ENCODE measurements at regions of chr6 and their contacts with region 1.

Region 1: DNA sequence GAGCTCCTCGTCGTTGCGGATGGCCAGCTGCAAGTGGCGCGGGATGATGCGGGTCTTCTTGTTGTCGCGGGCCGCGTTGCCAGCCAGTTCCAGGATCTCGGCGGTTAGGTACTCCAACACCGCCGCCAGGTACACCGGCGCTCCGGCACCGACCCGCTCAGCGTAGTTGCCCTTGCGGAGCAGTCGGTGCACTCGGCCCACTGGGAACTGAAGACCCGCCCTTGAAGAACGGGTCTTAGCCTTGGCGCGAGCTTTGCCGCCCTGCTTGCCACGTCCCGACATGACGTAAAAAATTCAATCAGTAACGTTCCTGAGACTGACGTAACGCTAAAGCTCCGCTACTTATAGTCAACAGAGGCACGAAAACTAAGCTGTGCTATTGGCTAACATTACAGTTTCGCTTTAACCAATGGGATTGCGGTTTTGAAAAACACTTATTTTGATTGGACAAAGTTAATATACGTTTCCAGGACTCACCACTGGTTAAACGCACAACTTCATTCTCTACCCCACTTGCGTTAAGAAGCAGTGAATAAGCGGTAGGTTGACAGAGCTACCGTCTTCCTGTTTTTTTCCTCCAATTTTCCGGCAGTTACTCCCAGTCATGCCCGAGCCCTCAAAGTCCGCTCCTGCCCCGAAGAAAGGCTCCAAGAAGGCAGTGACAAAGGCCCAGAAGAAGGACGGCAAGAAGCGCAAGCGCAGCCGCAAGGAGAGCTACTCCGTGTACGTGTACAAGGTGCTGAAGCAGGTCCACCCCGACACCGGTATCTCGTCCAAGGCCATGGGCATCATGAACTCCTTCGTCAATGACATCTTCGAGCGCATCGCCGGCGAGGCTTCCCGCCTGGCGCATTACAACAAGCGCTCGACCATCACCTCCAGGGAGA is 73.9 kb downstream of the OR2B2 start:
- DNase-seq: peak; percentile 73
- ATAC-seq: peak; percentile 76
- H3K4me3 Mint-ChIP-seq: no peak overlapping the region
- H3K27ac Mint-ChIP-seq: no peak overlapping the region
- H3K4me1 Mint-ChIP-seq: peaks cover 18% of the 10 kb centered on the region
- H3K27me3 Mint-ChIP-seq: no peaks in the 10 kb centered on the region
- CTCF ChIP-seq: no peak

Region 2: GRCh38 chr6:26045065-26045927 is 1793.0 kb before region 1 on chr6:
- CTCF ChIA-PET with region 1: no interaction called
- POLR2A ChIA-PET with region 1: interaction called, 20 read pairs
- intact Hi-C with region 1: no loop called
- DNase-seq: peak; percentile 51
- ATAC-seq: peak; percentile 58
- H3K4me3 Mint-ChIP-seq: peak overlapping the region; percentile 91
- H3K27ac Mint-ChIP-seq: peak overlapping the region; percentile 99
- H3K4me1 Mint-ChIP-seq: peaks cover 24% of the 10 kb centered on the region
- H3K27me3 Mint-ChIP-seq: no peaks in the 10 kb centered on the region
- CTCF ChIP-seq: no peak

Region 3: GRCh38 chr6:26553635-26554446 is 1284.5 kb before region 1 on chr6:
- CTCF ChIA-PET with region 1: no interaction called
- POLR2A ChIA-PET with region 1: no interaction called
- intact Hi-C with region 1: loop called (anchors 5 kb)
- DNase-seq: peak; percentile 67
- ATAC-seq: peak; percentile 46
- H3K4me3 Mint-ChIP-seq: no peak overlapping the region
- H3K27ac Mint-ChIP-seq: no peak overlapping the region
- H3K4me1 Mint-ChIP-seq: peaks cover 28% of the 10 kb centered on the region
- H3K27me3 Mint-ChIP-seq: no peaks in the 10 kb centered on the region
- CTCF ChIP-seq: no peak

Region 4: DNA sequence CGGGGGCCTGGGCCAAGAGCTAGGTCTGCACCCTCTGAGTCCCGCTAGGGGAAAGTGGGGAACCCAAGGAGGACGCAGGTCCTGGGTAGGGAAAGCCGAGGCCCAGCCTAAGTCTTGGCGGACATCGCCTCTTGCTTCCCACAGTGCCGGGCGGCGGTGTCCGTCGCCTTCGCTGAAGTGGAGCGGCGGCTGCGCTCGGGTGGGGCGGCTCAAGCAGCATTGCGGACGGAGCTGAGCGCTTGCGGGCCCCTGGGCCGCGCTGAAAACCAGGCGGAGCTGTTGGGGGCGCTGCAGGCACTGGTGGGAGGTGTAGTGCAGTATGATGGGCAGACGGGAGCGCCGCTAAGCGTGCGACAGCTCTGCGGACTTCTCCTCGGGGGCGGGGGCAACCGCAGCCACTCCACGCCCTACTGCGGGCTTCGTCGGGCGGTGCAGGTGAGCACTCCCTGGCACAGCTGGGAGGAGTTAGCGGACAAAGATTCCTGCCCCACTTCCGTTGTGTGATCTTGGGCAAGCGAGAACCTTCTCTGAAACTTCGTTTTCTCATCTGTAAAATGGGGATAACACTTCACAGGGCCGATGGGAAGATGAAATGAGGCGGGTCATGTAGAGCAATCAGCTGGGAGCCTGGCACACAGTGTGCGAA is 586.6 kb before region 1 on chr6:
- CTCF ChIA-PET with region 1: no interaction called
- POLR2A ChIA-PET with region 1: interaction called, 10 read pairs
- intact Hi-C with region 1: no loop called
- DNase-seq: peak; percentile 54
- ATAC-seq: peak; percentile 88
- H3K4me3 Mint-ChIP-seq: peak overlapping the region; percentile 87
- H3K27ac Mint-ChIP-seq: peak overlapping the region; percentile 19
- H3K4me1 Mint-ChIP-seq: peaks cover 14% of the 10 kb centered on the region
- H3K27me3 Mint-ChIP-seq: peaks cover 43% of the 10 kb centered on the region
- CTCF ChIP-seq: no peak

Region 5: GRCh38 chr6:27825025-27825793 is 13.1 kb before region 1 on chr6:
- CTCF ChIA-PET with region 1: no interaction called
- POLR2A ChIA-PET with region 1: interaction called, 216 read pairs
- intact Hi-C with region 1: loop called (anchors 1 kb)
- DNase-seq: no peak
- ATAC-seq: no peak
- H3K4me3 Mint-ChIP-seq: peak overlapping the region; percentile 96
- H3K27ac Mint-ChIP-seq: peak overlapping the region; percentile 99
- H3K4me1 Mint-ChIP-seq: peaks cover 31% of the 10 kb centered on the region
- H3K27me3 Mint-ChIP-seq: no peaks in the 10 kb centered on the region
- CTCF ChIP-seq: no peak

Region 6: GRCh38 chr6:28136585-28137504 is 298.5 kb after region 1 on chr6:
- CTCF ChIA-PET with region 1: no interaction called
- POLR2A ChIA-PET with region 1: interaction called, 7 read pairs
- intact Hi-C with region 1: loop called (anchors 5 kb)
- DNase-seq: peak; percentile 69
- ATAC-seq: peak; percentile 42
- H3K4me3 Mint-ChIP-seq: peak overlapping the region; percentile 98
- H3K27ac Mint-ChIP-seq: peak overlapping the region; percentile 100
- H3K4me1 Mint-ChIP-seq: peaks cover 76% of the 10 kb centered on the region
- H3K27me3 Mint-ChIP-seq: no peaks in the 10 kb centered on the region
- CTCF ChIP-seq: no peak